Activated B cell treated with CpG ODN at 0.5 μM for 24 hours (primary cell): ENCODE measurements at regions of chr2 and their contacts with region 1.

Region 1: DNA sequence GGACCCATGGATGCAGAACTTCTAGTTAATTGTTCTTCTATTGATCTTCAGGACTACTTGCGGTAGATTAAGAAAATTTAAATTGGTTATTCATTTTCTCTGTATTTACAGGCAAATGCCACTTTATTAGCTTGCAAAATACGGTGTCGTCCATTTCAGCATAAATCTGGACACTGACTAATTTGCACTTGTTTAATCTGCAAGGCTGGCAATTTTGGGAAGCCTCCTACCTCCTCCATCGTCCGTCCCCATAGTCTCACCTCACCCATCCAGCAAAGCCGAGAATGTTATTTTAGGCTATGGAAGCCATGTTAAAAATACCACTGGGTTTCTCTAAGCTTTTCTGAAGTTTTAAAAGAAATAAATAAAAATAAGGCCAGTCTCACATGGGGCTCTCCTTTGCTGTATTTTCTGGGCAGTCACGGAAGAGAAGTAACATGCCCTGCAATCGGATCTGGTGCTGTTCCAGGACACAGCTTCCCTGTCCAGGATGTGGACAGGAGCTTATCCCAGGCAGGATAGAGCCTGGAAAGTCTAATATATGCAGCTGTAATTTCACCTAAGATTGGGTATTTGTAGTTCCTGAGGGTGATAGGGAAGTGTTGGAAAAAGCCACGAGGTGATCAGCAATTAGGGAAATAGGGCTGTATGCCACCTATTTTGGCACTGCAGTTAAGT is 17.4 kb downstream of the TMEM178A start:
- DNase-seq: no peak
- ATAC-seq: no peak
- H3K4me3 Mint-ChIP-seq: no peak overlapping the region
- H3K27ac Mint-ChIP-seq: no peak overlapping the region
- H3K4me1 Mint-ChIP-seq: no peaks in the 10 kb centered on the region
- H3K27me3 Mint-ChIP-seq: peaks cover 5% of the 10 kb centered on the region
- CTCF ChIP-seq: no peak

Region 2: GRCh38 chr2:39289609-39290008 is 393.6 kb before region 1 on chr2:
- CTCF ChIA-PET with region 1: no interaction called
- POLR2A ChIA-PET with region 1: no interaction called
- intact Hi-C with region 1: no loop called
- DNase-seq: no peak
- ATAC-seq: no peak
- H3K4me3 Mint-ChIP-seq: no peak overlapping the region
- H3K27ac Mint-ChIP-seq: no peak overlapping the region
- H3K4me1 Mint-ChIP-seq: peaks cover 2% of the 10 kb centered on the region
- H3K27me3 Mint-ChIP-seq: no peaks in the 10 kb centered on the region
- CTCF ChIP-seq: no peak

Region 3: GRCh38 chr2:39504790-39505335 is 178.3 kb before region 1 on chr2:
- CTCF ChIA-PET with region 1: no interaction called
- POLR2A ChIA-PET with region 1: interaction called, 16 read pairs
- intact Hi-C with region 1: no loop called
- DNase-seq: no peak
- ATAC-seq: no peak
- H3K4me3 Mint-ChIP-seq: no peak overlapping the region
- H3K27ac Mint-ChIP-seq: no peak overlapping the region
- H3K4me1 Mint-ChIP-seq: peaks cover 24% of the 10 kb centered on the region
- H3K27me3 Mint-ChIP-seq: peaks cover 7% of the 10 kb centered on the region
- CTCF ChIP-seq: no peak

Region 4: DNA sequence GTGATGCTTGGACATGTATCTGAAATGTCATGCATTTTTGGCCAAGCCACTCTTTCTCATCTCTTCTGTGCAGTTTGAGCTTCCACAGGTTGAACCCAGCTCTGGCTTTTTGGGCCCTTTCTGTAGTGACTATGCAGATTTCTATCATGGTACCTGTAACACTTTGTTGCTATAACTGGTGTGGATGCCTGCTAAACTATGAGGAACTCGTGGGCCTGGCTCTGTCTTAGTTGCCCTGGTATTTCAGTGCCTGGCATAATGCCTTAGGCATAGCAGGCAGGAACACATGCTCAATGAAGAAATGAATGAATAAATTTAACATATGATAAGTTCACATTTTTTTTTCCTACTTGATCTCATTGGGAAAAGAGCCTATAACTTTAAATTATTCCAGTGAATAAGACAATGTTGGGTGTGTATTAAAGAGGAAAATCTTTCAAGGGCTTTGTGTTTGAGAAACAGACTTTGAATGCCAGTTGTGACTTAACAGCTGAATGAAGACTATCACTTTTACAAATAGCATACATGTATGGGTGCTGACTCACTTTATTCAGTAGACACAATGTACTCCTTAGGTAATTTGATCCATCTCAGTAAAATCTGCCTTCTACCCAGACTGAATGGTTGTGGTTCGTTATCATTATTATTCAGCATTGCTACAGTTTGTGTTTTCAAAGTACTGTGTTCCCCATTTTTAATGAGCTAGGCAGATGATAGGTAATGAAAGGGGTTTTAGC is 159.7 kb before region 1 on chr2:
- CTCF ChIA-PET with region 1: no interaction called
- POLR2A ChIA-PET with region 1: no interaction called
- intact Hi-C with region 1: no loop called
- DNase-seq: no peak
- ATAC-seq: no peak
- H3K4me3 Mint-ChIP-seq: no peak overlapping the region
- H3K27ac Mint-ChIP-seq: no peak overlapping the region
- H3K4me1 Mint-ChIP-seq: peaks cover 40% of the 10 kb centered on the region
- H3K27me3 Mint-ChIP-seq: no peaks in the 10 kb centered on the region
- CTCF ChIP-seq: no peak